Dendritic cell treated with granulocyte-macrophage colony-stimulating factor and Interleukin-4, amounts not matched to agents 40 ng/mL and 50 ng/mL, for 4 days (primary cell): ENCODE measurements at regions of chr4 and their contacts with region 1.

Region 1: DNA sequence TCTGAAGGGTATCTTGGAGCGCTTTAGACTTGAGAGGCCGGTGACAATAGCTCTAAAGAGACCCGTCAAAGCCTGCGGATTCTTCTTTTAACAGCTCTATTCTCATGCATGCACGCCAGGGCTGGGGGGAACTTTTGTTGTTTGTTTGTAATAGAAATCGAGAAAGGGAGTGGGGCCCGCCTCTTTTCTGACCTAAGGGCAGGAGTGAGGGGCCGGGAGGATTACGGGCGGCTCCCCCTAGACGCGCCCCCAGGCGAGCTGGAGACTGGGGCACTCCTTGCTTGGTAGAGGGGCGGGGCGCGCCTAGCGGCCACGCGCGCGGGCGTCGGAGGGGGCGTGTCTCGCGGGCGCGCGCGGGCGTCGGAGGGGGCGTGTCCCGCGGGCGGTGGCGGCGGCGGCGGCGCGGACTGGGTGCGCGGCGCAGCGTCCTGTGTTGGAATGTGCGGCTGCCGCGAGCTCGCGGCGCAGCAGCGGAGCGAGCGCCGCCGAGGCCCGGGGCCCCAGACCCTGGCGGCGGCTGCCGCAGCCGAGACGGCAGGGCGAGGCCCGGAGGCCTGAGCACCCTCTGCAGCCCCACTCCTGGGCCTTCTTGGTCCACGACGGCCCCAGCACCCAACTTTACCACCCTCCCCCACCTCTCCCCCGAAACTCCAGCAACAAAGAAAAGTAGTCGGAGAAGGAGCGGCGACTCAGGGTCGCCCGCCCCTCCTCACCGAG is at the start of gene REST:
- H3K4me3 Mint-ChIP-seq: peak within 1 kb of the TSS; percentile 94
- H3K27ac Mint-ChIP-seq: peak within 1 kb of the TSS; percentile 87
- H3K4me1 Mint-ChIP-seq: peaks cover 36% of the 10 kb centered on the region
- H3K27me3 Mint-ChIP-seq: no peaks in the 10 kb centered on the region

Region 2: GRCh38 chr4:56387023-56388001 is 520.3 kb before region 1 on chr4 and contains the start of gene AASDH:
- intact Hi-C with region 1: loop called (anchors 5 kb)
- H3K4me3 Mint-ChIP-seq: peak within 1 kb of the TSS; percentile 87
- H3K27ac Mint-ChIP-seq: peak within 1 kb of the TSS; percentile 99
- H3K4me1 Mint-ChIP-seq: peaks cover 14% of the 10 kb centered on the region
- H3K27me3 Mint-ChIP-seq: no peaks in the 10 kb centered on the region

Region 3: GRCh38 chr4:56435306-56435926 is 472.2 kb before region 1 on chr4 and contains the start of gene PPAT:
- intact Hi-C with region 1: loop called (anchors 5 kb)
- H3K4me3 Mint-ChIP-seq: peak within 1 kb of the TSS; percentile 78
- H3K27ac Mint-ChIP-seq: peak within 1 kb of the TSS; percentile 89
- H3K4me1 Mint-ChIP-seq: peaks cover 35% of the 10 kb centered on the region
- H3K27me3 Mint-ChIP-seq: no peaks in the 10 kb centered on the region

Region 4: DNA sequence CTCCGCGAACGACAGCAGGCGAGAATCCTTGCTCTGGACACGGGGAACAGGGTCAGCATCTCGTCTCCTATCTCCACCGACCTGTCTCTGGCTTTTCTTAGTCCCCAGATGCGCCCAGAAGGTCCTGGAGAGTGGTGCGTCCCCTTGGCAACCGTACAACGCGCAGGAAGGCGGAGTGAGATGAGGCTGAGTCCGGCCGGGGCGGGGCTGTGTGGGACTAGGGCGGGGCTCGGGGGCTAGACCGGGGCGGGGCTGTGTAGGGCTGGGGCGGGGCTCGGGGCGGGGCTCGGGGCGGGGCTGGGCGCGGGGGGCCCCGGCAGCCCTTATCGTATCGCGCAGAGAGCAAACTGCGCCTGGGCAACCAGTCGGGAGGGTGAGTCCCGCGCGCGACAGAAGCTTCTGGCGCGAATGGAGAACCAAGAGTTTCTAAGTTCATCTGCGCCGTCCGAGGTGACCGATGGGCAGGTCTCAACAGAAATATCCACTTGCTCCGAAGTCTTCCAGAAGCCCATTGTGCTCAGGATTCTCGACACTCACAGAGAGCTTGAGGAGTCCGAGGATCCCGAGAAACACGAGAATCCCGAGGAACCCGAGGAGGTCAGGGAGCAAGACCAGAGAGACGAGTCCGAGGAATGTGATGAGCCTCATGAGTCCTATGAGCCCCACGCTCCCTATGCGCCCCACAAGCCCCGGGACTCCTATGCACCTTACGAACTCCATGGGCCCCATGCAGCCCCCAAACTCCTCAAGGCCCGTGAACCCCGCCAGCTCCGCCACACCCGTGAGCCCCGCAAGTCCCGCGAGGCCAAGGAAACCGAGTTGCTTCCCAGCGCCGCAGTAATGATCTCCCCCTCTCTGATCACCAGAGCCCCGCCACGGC is 377.1 kb before region 1 on chr4:
- intact Hi-C with region 1: loop called (anchors 10 kb)
- H3K4me3 Mint-ChIP-seq: no peak overlapping the region
- H3K27ac Mint-ChIP-seq: no peak overlapping the region
- H3K4me1 Mint-ChIP-seq: no peaks in the 10 kb centered on the region
- H3K27me3 Mint-ChIP-seq: peaks cover 4% of the 10 kb centered on the region

Region 5: DNA sequence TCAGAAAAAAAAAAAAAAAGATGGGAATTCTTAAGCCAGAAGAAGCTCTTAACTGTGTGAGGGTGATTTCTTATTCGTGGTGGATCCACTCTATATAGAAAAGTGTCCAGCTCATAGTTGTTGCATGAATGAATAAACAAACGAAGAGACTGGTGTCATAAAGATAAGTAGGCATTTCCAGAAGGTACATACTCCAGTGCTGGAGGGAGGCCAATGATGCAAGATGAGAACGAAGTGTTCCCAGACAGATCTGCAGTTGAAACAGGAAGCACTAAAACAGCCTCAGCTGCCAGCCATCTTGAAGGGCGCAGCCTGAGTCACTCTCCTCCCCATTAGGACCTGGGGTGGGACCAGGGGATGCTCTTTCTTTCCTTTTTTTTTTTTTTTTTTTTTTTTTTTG is 179.1 kb before region 1 on chr4:
- intact Hi-C with region 1: no loop called
- H3K4me3 Mint-ChIP-seq: no peak overlapping the region
- H3K27ac Mint-ChIP-seq: no peak overlapping the region
- H3K4me1 Mint-ChIP-seq: peaks cover 31% of the 10 kb centered on the region
- H3K27me3 Mint-ChIP-seq: peaks cover 4% of the 10 kb centered on the region

Region 6: GRCh38 chr4:56871371-56871866 is 36.2 kb before region 1 on chr4:
- intact Hi-C with region 1: loop called (anchors 5 kb)
- H3K4me3 Mint-ChIP-seq: no peak overlapping the region
- H3K27ac Mint-ChIP-seq: no peak overlapping the region
- H3K4me1 Mint-ChIP-seq: peaks cover 8% of the 10 kb centered on the region
- H3K27me3 Mint-ChIP-seq: no peaks in the 10 kb centered on the region

Region 7: GRCh38 chr4:56977321-56978012 is 69.8 kb after region 1 on chr4 and contains the start of gene NOA1:
- intact Hi-C with region 1: loop called (anchors 1 kb)
- H3K4me3 Mint-ChIP-seq: peak within 1 kb of the TSS; percentile 93
- H3K27ac Mint-ChIP-seq: peak within 1 kb of the TSS; percentile 96
- H3K4me1 Mint-ChIP-seq: peaks cover 39% of the 10 kb centered on the region
- H3K27me3 Mint-ChIP-seq: no peaks in the 10 kb centered on the region